PC-3 (cell line): ENCODE measurements at regions of chr7 and their contacts with region 1.

Region 1: DNA sequence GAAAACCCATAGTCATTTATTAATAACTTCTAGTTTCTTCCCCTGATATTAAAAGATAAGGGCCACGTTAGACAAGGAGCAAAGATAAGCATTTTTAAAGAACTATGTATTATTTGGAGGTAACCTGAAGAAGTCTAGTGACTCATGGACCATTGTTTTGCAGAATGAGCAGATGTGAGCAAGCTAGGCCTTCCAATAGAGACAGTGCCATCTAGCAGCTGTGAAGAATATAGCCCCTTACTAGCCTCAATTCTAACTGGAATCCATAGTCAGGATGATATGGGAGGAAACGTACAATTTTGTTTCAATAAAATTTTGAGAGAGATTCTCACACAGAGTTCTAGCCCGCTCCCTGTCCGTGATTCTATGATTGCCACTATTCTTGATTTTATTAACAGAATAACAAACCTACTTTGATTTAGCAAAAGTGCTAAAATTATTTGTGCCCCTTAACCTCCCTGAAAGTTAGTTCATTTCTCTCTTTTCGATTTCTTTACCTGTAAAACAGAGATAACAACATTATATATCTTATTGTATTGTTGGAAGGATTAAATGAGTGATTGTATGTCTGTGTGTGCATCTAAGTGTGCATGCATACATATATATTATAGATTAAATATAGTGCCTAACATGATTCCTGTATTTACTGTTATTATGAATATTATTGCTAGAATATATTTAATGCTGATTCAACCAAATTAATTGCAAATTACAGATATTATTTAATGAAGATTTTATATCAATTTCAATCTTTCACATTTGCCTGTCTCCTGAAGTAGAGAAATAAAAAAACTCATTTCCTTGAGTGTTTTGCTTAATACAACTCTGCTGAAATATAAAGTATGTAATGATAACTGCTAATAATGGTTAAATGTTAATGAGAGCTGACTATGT is 22.7 kb downstream of the FAM237B start:
- DNase-seq: peak; percentile 71
- ATAC-seq: peak; percentile 100
- H3K4me3 ChIP-seq: no peak overlapping the region
- H3K27ac ChIP-seq: no peak overlapping the region
- H3K4me1 ChIP-seq: peaks cover 21% of the 10 kb centered on the region
- H3K27me3 ChIP-seq: no peaks in the 10 kb centered on the region
- CTCF ChIP-seq: peak; percentile 82

Region 2: DNA sequence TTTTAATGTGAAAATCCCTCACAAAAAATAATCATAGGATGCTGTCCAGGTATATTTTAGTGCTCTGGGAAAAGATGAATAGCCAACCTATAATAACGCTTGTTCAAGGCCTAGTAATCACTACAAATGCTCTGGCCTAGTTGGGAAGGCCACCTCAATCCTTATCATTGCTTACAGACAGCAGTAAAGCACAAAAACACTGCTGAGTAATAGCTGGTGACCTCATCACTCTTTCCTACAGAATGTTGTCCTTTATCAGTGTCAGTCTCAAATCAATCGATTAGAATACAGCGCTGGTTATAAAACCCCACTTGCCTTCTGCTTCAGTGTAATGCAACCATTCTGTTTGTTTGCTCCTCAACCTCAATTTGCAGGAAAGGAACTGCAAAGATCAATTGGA is 216.8 kb before region 1 on chr7:
- CTCF ChIA-PET with region 1: no interaction called
- POLR2A ChIA-PET with region 1: no interaction called
- intact Hi-C with region 1: no loop called
- DNase-seq: no peak
- ATAC-seq: no peak
- H3K4me3 ChIP-seq: no peak overlapping the region
- H3K27ac ChIP-seq: no peak overlapping the region
- H3K4me1 ChIP-seq: no peaks in the 10 kb centered on the region
- H3K27me3 ChIP-seq: no peaks in the 10 kb centered on the region
- CTCF ChIP-seq: no peak

Region 3: DNA sequence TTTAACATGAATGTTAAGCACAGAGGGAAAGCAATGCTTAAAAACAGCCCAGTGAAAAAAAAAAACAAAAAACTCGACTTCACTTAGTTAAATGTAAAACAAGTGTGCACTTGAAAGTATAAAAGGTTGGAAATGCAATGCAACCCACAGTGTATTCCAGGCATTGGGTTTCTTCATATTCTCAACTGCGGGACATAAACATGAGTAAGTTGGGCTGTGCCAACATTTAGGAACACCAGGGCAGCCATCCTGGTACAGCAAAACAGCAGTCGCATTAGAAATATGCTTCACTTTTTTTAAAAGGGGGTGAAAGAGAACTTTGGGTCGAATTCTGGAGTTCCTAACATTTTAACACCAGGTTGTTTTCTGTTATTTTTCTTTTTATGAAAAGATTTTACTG is 143.2 kb before region 1 on chr7:
- CTCF ChIA-PET with region 1: interaction called, 3 read pairs
- POLR2A ChIA-PET with region 1: interaction called, 5 read pairs
- intact Hi-C with region 1: loop called (anchors 1 kb)
- DNase-seq: no peak
- ATAC-seq: no peak
- H3K4me3 ChIP-seq: peak overlapping the region; percentile 86
- H3K27ac ChIP-seq: no peak overlapping the region
- H3K4me1 ChIP-seq: peaks cover 34% of the 10 kb centered on the region
- H3K27me3 ChIP-seq: no peaks in the 10 kb centered on the region
- CTCF ChIP-seq: no peak